GM12878 (cell line): ENCODE measurements at regions of chr22 and their contacts with region 1.

Region 1: DNA sequence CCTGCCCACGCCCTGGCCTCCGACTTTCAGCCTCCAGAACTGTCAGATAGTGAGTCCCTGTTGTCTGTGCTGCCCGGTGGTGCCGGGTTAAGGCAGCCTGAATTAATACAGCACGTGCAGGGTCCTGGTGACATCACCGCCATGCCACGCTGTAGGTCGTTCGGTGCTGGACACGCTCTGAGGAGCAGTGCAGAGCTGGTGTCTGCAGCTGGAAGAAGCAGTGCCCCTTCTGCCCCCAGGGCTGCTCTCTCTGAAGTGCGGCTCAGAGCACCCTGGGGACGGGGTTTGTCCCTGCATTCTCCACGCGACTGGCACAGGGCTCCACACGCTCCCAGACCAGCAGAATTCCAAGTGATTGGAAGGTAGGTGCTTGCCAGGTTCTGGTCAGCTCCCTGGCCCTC is 831.5 kb downstream of the TBC1D22A start:
- DNase-seq: no peak
- ATAC-seq: no peak
- H3K4me3 ChIP-seq: no peak overlapping the region
- H3K27ac ChIP-seq: no peak overlapping the region
- H3K4me1 ChIP-seq: no peaks in the 10 kb centered on the region
- H3K27me3 ChIP-seq: no peaks in the 10 kb centered on the region
- CTCF ChIP-seq: no peak
- EP300 ChIP-seq: no peak
- POLR2A ChIP-seq: no peak
- RAD21 ChIP-seq: no peak

Region 2: GRCh38 chr22:45615364-45615763 is 1978.5 kb before region 1 on chr22:
- CTCF ChIA-PET with region 1: no interaction called
- POLR2A ChIA-PET with region 1: no interaction called
- RAD21 ChIA-PET with region 1: no interaction called
- SMC1A ChIA-PET with region 1: no interaction called
- in situ Hi-C with region 1: loop called (anchors 5 kb)
- intact Hi-C with region 1: no loop called
- DNase-seq: no peak
- ATAC-seq: no peak
- H3K4me3 ChIP-seq: no peak overlapping the region
- H3K27ac ChIP-seq: no peak overlapping the region
- H3K4me1 ChIP-seq: no peaks in the 10 kb centered on the region
- H3K27me3 ChIP-seq: no peaks in the 10 kb centered on the region
- CTCF ChIP-seq: no peak
- EP300 ChIP-seq: no peak
- POLR2A ChIP-seq: no peak
- RAD21 ChIP-seq: no peak

Region 3: GRCh38 chr22:47495110-47495509 is 98.8 kb before region 1 on chr22:
- CTCF ChIA-PET with region 1: no interaction called
- POLR2A ChIA-PET with region 1: no interaction called
- RAD21 ChIA-PET with region 1: no interaction called
- SMC1A ChIA-PET with region 1: no interaction called
- in situ Hi-C with region 1: no loop called
- intact Hi-C with region 1: no loop called
- DNase-seq: no peak
- ATAC-seq: no peak
- H3K4me3 ChIP-seq: no peak overlapping the region
- H3K27ac ChIP-seq: no peak overlapping the region
- H3K4me1 ChIP-seq: no peaks in the 10 kb centered on the region
- H3K27me3 ChIP-seq: no peaks in the 10 kb centered on the region
- CTCF ChIP-seq: no peak
- EP300 ChIP-seq: no peak
- POLR2A ChIP-seq: no peak
- RAD21 ChIP-seq: no peak